CD8-positive, alpha-beta memory T cell (primary cell): ENCODE measurements at regions of chr1 and their contacts with region 1.

Region 1: DNA sequence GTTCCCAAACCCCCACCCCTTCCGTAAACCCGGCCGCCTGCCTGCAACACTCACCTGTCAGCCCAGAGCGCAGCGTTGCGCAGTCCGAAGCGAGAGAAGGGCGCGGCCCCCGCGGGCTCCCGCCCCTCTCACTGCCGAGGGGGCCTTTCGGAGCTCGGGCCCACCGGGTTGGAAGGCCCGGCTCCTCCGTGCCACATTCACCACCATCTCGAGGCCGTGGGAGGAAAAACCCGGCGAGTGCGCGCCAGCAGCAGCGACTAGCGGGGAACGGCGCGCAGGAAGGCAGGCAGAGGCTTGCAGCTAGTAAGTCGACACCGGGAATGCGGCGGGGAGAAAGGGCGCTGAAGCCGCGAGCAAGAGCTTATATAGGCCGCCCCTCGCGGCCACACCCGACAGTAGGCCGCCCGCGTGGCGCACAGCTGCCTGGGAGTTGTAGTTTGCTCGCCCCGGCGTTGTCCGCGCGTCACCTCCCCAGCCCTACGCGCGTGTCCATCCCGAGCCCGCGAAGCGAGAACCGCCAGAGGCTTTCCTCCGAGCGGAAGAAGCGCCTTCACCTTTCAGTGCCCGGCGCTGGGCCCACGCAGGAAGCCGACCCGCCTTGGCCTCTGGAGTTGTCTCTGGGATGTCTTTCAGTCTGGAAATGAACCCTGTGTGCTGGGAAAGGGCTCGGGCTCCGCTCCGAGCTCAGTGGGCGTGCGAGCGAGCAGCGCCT is 10.4 kb upstream of the RAB42 start:
- DNase-seq: peak; percentile 86 to 95 (median 91)
- H3K4me3 ChIP-seq: peak overlapping the region; percentile 87
- H3K4me3 Mint-ChIP-seq: peak overlapping the region; percentile 93 to 99 (median 98)
- H3K27ac ChIP-seq: peak overlapping the region; percentile 89
- H3K27ac Mint-ChIP-seq: peak overlapping the region; percentile 84 to 98 (median 94)
- H3K4me1 ChIP-seq: peaks cover 31% of the 10 kb centered on the region
- H3K4me1 Mint-ChIP-seq: peaks cover 36 to 55% (median 52%) of the 10 kb centered on the region in 3 donors
- H3K27me3 ChIP-seq: no peaks in the 10 kb centered on the region
- H3K27me3 Mint-ChIP-seq: peaks cover 0 to 2% of the 10 kb centered on the region in 2 donors

Region 2: GRCh38 chr1:28248283-28249012 is 333.2 kb before region 1 on chr1:
- CTCF ChIA-PET with region 1: interaction called, 7 read pairs
- POLR2A ChIA-PET with region 1: interaction called, 13 read pairs
- DNase-seq: peak; percentile 71 to 85 (median 75)
- H3K4me3 ChIP-seq: peak overlapping the region; percentile 76
- H3K4me3 Mint-ChIP-seq: peak overlapping the region; percentile 50 to 89 (median 84)
- H3K27ac ChIP-seq: peak overlapping the region; percentile 88
- H3K27ac Mint-ChIP-seq: peak overlapping the region; percentile 88 to 99 (median 95)
- H3K4me1 ChIP-seq: peaks cover 54% of the 10 kb centered on the region
- H3K4me1 Mint-ChIP-seq: peaks cover 43 to 53% (median 51%) of the 10 kb centered on the region in 3 donors
- H3K27me3 ChIP-seq: no peaks in the 10 kb centered on the region
- H3K27me3 Mint-ChIP-seq: no peaks in the 10 kb centered on the region

Region 3: GRCh38 chr1:28505406-28506187 is 76.1 kb before region 1 on chr1 and contains the start of gene RCC1:
- CTCF ChIA-PET with region 1: interaction called, 9 read pairs
- POLR2A ChIA-PET with region 1: interaction called, 28 read pairs
- DNase-seq: peak; percentile 90 to 98 (median 96)
- H3K4me3 ChIP-seq: peak within 1 kb of the TSS; percentile 99
- H3K4me3 Mint-ChIP-seq: peak within 1 kb of the TSS; percentile 93 to 99 (median 97)
- H3K27ac ChIP-seq: peak within 1 kb of the TSS; percentile 90
- H3K27ac Mint-ChIP-seq: peak within 1 kb of the TSS; percentile 89 to 99 (median 96)
- H3K4me1 ChIP-seq: peaks cover 41% of the 10 kb centered on the region
- H3K4me1 Mint-ChIP-seq: peaks cover 40 to 49% (median 49%) of the 10 kb centered on the region in 3 donors
- H3K27me3 ChIP-seq: no peaks in the 10 kb centered on the region
- H3K27me3 Mint-ChIP-seq: peaks cover 0 to 6% of the 10 kb centered on the region in 2 donors
- total RNA-seq, gene RCC1: 115 to 116 TPM

Region 4: GRCh38 chr1:28552758-28553663 is 28.7 kb before region 1 on chr1 and contains the start of gene TRNAU1AP:
- CTCF ChIA-PET with region 1: interaction called, 7 read pairs
- POLR2A ChIA-PET with region 1: interaction called, 59 read pairs
- DNase-seq: peak; percentile 95 to 97 (median 97)
- H3K4me3 ChIP-seq: peak within 1 kb of the TSS; percentile 98
- H3K4me3 Mint-ChIP-seq: peak within 1 kb of the TSS; percentile 97 to 100 (median 99)
- H3K27ac ChIP-seq: peak within 1 kb of the TSS; percentile 91
- H3K27ac Mint-ChIP-seq: peak within 1 kb of the TSS; percentile 94 to 99 (median 98)
- H3K4me1 ChIP-seq: peaks cover 19% of the 10 kb centered on the region
- H3K4me1 Mint-ChIP-seq: peaks cover 20 to 37% (median 21%) of the 10 kb centered on the region in 3 donors
- H3K27me3 ChIP-seq: no peaks in the 10 kb centered on the region
- H3K27me3 Mint-ChIP-seq: no peaks in the 10 kb centered on the region
- total RNA-seq, gene TRNAU1AP: 46.0 to 49.6 TPM

Region 5: GRCh38 chr1:28648474-28649198 is 66.9 kb after region 1 on chr1 and contains the start of gene RNU11:
- CTCF ChIA-PET with region 1: interaction called, 7 read pairs
- POLR2A ChIA-PET with region 1: interaction called, 49 read pairs
- DNase-seq: peak; percentile 75 to 94 (median 93)
- H3K4me3 ChIP-seq: peak within 1 kb of the TSS; percentile 89
- H3K4me3 Mint-ChIP-seq: peak within 1 kb of the TSS; percentile 79 to 92 (median 90)
- H3K27ac ChIP-seq: peak within 1 kb of the TSS; percentile 99
- H3K27ac Mint-ChIP-seq: peak within 1 kb of the TSS; percentile 95 to 100 (median 99)
- H3K4me1 ChIP-seq: peaks cover 30% of the 10 kb centered on the region
- H3K4me1 Mint-ChIP-seq: peaks cover 24 to 37% (median 33%) of the 10 kb centered on the region in 3 donors
- H3K27me3 ChIP-seq: no peaks in the 10 kb centered on the region
- H3K27me3 Mint-ChIP-seq: peaks cover 0 to 6% of the 10 kb centered on the region in 2 donors
- total RNA-seq, gene RNU11: not detected

Region 6: GRCh38 chr1:28736450-28737306 is 155.0 kb after region 1 on chr1 and contains the start of gene YTHDF2:
- CTCF ChIA-PET with region 1: interaction called, 11 read pairs
- POLR2A ChIA-PET with region 1: interaction called, 28 read pairs
- DNase-seq: peak; percentile 95 to 98 (median 97)
- H3K4me3 ChIP-seq: peak within 1 kb of the TSS; percentile 79
- H3K4me3 Mint-ChIP-seq: peak within 1 kb of the TSS; percentile 89 to 100 (median 97)
- H3K27ac ChIP-seq: peak within 1 kb of the TSS; percentile 94
- H3K27ac Mint-ChIP-seq: peak within 1 kb of the TSS; percentile 87 to 99 (median 96)
- H3K4me1 ChIP-seq: peaks cover 27% of the 10 kb centered on the region
- H3K4me1 Mint-ChIP-seq: peaks cover 33 to 46% (median 39%) of the 10 kb centered on the region in 3 donors
- H3K27me3 ChIP-seq: no peaks in the 10 kb centered on the region
- H3K27me3 Mint-ChIP-seq: peaks cover 0 to 3% of the 10 kb centered on the region in 2 donors
- total RNA-seq, gene YTHDF2: 98.3 to 105 TPM

Region 7: DNA sequence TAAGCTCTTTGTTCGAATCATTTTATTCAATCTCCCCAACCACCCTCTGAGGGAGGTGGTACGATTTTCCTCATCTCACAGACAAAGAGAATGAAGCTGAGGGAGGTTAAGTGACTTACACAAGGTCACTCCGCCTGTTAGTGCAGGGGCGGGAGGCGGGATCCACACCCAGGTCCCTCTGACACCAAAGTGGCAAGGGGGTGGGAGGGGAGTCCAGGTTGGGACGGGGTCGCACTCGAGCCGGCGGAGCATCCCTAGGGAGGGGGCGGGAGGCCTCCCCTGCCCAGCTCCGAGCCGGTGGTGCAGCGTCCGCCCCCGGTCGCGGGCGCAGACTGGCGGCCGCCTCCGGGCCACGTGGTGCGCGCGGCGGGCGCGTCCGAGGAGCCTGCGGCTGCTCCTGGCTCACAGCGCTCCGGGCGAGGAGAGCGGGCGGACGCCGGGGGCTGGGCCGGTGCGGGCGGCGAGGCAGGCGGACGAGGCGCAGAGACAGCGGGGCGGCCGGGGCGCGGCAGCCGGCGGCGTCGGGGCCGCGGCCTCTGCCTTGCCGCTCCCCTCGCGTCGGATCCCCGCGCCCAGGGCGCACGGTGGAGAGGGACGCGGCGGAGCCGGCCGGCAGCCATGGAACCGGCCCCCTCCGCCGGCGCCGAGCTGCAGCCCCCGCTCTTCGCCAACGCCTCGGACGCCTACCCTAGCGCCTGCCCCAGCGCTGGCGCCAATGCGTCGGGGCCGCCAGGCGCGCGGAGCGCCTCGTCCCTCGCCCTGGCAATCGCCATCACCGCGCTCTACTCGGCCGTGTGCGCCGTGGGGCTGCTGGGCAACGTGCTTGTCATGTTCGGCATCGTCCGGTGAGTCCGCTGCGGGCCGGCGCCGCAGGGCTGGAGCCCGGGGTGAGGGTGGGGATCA is 230.3 kb after region 1 on chr1 and contains the start of gene OPRD1:
- CTCF ChIA-PET with region 1: no interaction called
- POLR2A ChIA-PET with region 1: no interaction called
- DNase-seq: no peak
- H3K4me3 ChIP-seq: no peak within 1 kb of the TSS
- H3K4me3 Mint-ChIP-seq: peak within 1 kb of the TSS in 1 of 7 donors; percentile 32
- H3K27ac ChIP-seq: no peak within 1 kb of the TSS
- H3K27ac Mint-ChIP-seq: no peak within 1 kb of the TSS
- H3K4me1 ChIP-seq: no peaks in the 10 kb centered on the region
- H3K4me1 Mint-ChIP-seq: peaks cover 0 to 10% (median 5%) of the 10 kb centered on the region in 3 donors
- H3K27me3 ChIP-seq: peaks cover 24% of the 10 kb centered on the region
- H3K27me3 Mint-ChIP-seq: peaks cover 33 to 64% of the 10 kb centered on the region in 2 donors
- total RNA-seq, gene OPRD1: not detected